CD8-positive, alpha-beta T cell (primary cell): ENCODE measurements at regions of chr22 and their contacts with region 1.

Region 1: GRCh38 chr22:37608477-37609239 is at the start of gene GGA1:
- DNase-seq: peak; percentile 89 to 100 (median 95)
- ATAC-seq: peak; percentile 76
- H3K4me3 ChIP-seq: peak within 1 kb of the TSS; percentile 71 to 84
- H3K4me3 Mint-ChIP-seq: peak within 1 kb of the TSS; percentile 89
- H3K27ac ChIP-seq: peak within 1 kb of the TSS; percentile 84 to 99
- H3K27ac Mint-ChIP-seq: peak within 1 kb of the TSS; percentile 92
- H3K4me1 ChIP-seq: peaks cover 58% of the 10 kb centered on the region
- H3K4me1 Mint-ChIP-seq: peaks cover 56% of the 10 kb centered on the region
- H3K27me3 ChIP-seq: no peaks in the 10 kb centered on the region
- H3K27me3 Mint-ChIP-seq: no peaks in the 10 kb centered on the region
- CTCF ChIP-seq: no peak
- total RNA-seq, gene GGA1: 66.0 to 69.1 TPM

Region 2: DNA sequence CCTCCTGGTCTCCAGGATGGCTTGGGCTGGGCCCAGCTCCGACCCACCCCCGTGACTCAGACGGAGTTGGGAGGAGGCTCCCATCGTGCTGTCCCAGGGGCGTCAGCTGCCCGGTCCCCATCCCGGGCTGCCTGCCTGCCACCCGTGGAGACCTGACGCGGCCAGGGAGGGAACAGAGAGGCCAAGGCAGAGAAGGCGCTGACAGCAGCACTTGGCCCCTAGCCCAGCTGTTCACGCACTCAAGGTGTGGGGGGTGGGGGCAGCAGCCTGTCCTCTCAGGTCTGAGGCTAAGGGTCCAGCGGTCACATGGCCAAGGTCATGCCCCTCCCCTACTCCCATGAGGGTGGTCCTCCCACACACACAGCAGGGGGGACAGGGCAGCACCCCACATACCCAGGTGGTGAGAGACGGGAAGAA is 230.0 kb before region 1 on chr22:
- CTCF ChIA-PET with region 1: no interaction called
- POLR2A ChIA-PET with region 1: no interaction called
- intact Hi-C with region 1: no loop called
- DNase-seq: no peak
- ATAC-seq: no peak
- H3K4me3 ChIP-seq: no peak overlapping the region
- H3K4me3 Mint-ChIP-seq: no peak overlapping the region
- H3K27ac ChIP-seq: no peak overlapping the region
- H3K27ac Mint-ChIP-seq: no peak overlapping the region
- H3K4me1 ChIP-seq: no peaks in the 10 kb centered on the region
- H3K4me1 Mint-ChIP-seq: no peaks in the 10 kb centered on the region
- H3K27me3 ChIP-seq: peaks cover 0 to 3% of the 10 kb centered on the region in 2 experiments
- H3K27me3 Mint-ChIP-seq: peaks cover 25% of the 10 kb centered on the region
- CTCF ChIP-seq: no peak

Region 3: GRCh38 chr22:37486224-37486845 is 122.3 kb before region 1 on chr22 and contains the start of gene MFNG:
- CTCF ChIA-PET with region 1: interaction called, 6 read pairs
- POLR2A ChIA-PET with region 1: interaction called, 25 read pairs
- intact Hi-C with region 1: loop called in 1 of 2 experiments (anchors 1 kb)
- DNase-seq: peak; percentile 35 to 87 (median 74)
- ATAC-seq: peak; percentile 59
- H3K4me3 ChIP-seq: peak within 1 kb of the TSS; percentile 73 to 96
- H3K4me3 Mint-ChIP-seq: peak within 1 kb of the TSS; percentile 94
- H3K27ac ChIP-seq: peak within 1 kb of the TSS; percentile 69 to 87
- H3K27ac Mint-ChIP-seq: peak within 1 kb of the TSS; percentile 98
- H3K4me1 ChIP-seq: peaks cover 62% of the 10 kb centered on the region
- H3K4me1 Mint-ChIP-seq: peaks cover 72% of the 10 kb centered on the region
- H3K27me3 ChIP-seq: no peaks in the 10 kb centered on the region
- H3K27me3 Mint-ChIP-seq: no peaks in the 10 kb centered on the region
- CTCF ChIP-seq: no peak
- total RNA-seq, gene MFNG: 63.2 to 63.9 TPM

Region 4: DNA sequence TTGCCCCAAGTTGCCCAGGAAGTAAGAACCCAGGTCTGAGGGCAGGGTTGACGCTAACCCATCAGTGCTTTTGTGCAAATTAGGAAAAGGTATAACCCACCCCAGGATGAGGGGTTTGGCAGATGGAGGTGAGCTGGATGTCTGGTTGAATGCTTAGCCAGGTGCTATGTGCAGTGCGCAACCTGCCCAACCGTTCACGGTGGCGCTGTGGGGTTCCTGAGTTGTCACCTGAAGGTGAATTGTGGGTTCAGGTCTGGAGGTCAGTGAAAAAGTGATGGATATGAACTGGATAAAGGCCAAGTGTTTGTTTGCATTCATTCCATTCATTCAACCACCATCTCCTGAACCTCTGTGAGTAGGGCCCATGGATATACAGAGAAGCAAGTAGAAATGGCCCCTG is 14.4 kb before region 1 on chr22:
- CTCF ChIA-PET with region 1: interaction called, 85 read pairs
- POLR2A ChIA-PET with region 1: interaction called, 25 read pairs
- intact Hi-C with region 1: loop called (anchors 1 kb)
- DNase-seq: no peak
- ATAC-seq: no peak
- H3K4me3 ChIP-seq: no peak overlapping the region
- H3K4me3 Mint-ChIP-seq: no peak overlapping the region
- H3K27ac ChIP-seq: no peak overlapping the region
- H3K27ac Mint-ChIP-seq: no peak overlapping the region
- H3K4me1 ChIP-seq: peaks cover 6% of the 10 kb centered on the region
- H3K4me1 Mint-ChIP-seq: peaks cover 12% of the 10 kb centered on the region
- H3K27me3 ChIP-seq: no peaks in the 10 kb centered on the region
- H3K27me3 Mint-ChIP-seq: no peaks in the 10 kb centered on the region
- CTCF ChIP-seq: no peak

Region 5: DNA sequence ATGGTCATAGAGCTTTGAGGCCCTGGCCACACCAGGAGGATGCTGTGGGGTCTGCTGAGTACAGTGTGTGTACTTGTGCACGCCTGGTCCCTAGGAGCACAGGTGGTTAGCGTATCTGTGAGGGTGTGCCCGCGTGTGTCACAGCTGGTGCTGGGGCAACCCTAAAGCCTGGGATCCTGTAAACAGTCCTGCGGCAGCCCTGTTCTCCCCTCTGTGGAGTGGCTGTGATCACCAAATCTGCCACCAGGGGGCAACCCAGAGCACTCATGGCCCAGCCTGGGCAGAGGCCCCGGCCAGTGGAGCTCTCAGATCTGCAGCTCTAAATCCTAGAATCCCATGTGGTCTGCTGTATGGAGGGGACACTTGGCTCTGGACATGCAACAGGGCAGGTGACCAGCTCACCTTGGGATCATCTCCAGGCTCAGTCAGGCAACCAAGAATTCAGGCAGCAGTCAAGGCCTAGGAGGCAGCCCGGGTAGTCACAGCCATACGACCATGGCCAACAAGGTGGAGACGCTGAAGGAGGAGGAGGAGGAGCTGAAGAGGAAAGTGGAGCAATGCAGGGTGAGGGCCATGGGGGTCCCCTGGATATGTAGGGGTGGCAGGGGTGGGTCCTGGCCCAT is 34.7 kb after region 1 on chr22:
- CTCF ChIA-PET with region 1: interaction called, 2,176 read pairs
- POLR2A ChIA-PET with region 1: interaction called, 16 read pairs
- intact Hi-C with region 1: loop called (anchors 1 kb)
- DNase-seq: peak; percentile 78 to 93 (median 85)
- ATAC-seq: peak; percentile 62
- H3K4me3 ChIP-seq: no peak overlapping the region
- H3K4me3 Mint-ChIP-seq: peak overlapping the region; percentile 65
- H3K27ac ChIP-seq: peak overlapping the region; percentile 15 to 43
- H3K27ac Mint-ChIP-seq: peak overlapping the region; percentile 69
- H3K4me1 ChIP-seq: peaks cover 39% of the 10 kb centered on the region
- H3K4me1 Mint-ChIP-seq: peaks cover 42% of the 10 kb centered on the region
- H3K27me3 ChIP-seq: no peaks in the 10 kb centered on the region
- H3K27me3 Mint-ChIP-seq: no peaks in the 10 kb centered on the region
- CTCF ChIP-seq: peak; percentile 85

Region 6: GRCh38 chr22:37686002-37686982 is 77.6 kb after region 1 on chr22 and contains the start of gene NOL12:
- CTCF ChIA-PET with region 1: interaction called, 2,176 read pairs
- POLR2A ChIA-PET with region 1: interaction called, 17 read pairs
- intact Hi-C with region 1: loop called (anchors 1 kb)
- DNase-seq: peak; percentile 63 to 90 (median 74)
- ATAC-seq: peak; percentile 91
- H3K4me3 ChIP-seq: peak within 1 kb of the TSS; percentile 88 to 97
- H3K4me3 Mint-ChIP-seq: peak within 1 kb of the TSS; percentile 94
- H3K27ac ChIP-seq: peak within 1 kb of the TSS; percentile 79 to 87
- H3K27ac Mint-ChIP-seq: peak within 1 kb of the TSS; percentile 95
- H3K4me1 ChIP-seq: peaks cover 16% of the 10 kb centered on the region
- H3K4me1 Mint-ChIP-seq: peaks cover 28% of the 10 kb centered on the region
- H3K27me3 ChIP-seq: no peaks in the 10 kb centered on the region
- H3K27me3 Mint-ChIP-seq: no peaks in the 10 kb centered on the region
- CTCF ChIP-seq: no peak
- total RNA-seq, gene NOL12: 25.1 to 29.1 TPM

Region 7: GRCh38 chr22:37862570-37863325 is 254.1 kb after region 1 on chr22:
- CTCF ChIA-PET with region 1: interaction called, 11 read pairs
- POLR2A ChIA-PET with region 1: no interaction called
- intact Hi-C with region 1: loop called in 1 of 2 experiments (anchors 5 kb)
- DNase-seq: no peak
- ATAC-seq: no peak
- H3K4me3 ChIP-seq: no peak overlapping the region
- H3K4me3 Mint-ChIP-seq: no peak overlapping the region
- H3K27ac ChIP-seq: no peak overlapping the region
- H3K27ac Mint-ChIP-seq: no peak overlapping the region
- H3K4me1 ChIP-seq: no peaks in the 10 kb centered on the region
- H3K4me1 Mint-ChIP-seq: peaks cover 4% of the 10 kb centered on the region
- H3K27me3 ChIP-seq: no peaks in the 10 kb centered on the region
- H3K27me3 Mint-ChIP-seq: no peaks in the 10 kb centered on the region
- CTCF ChIP-seq: no peak